PC-9 (cell line): ENCODE measurements at regions of chr3 and their contacts with region 1.

Region 1: GRCh38 chr3:58608648-58609047 is 31.5 kb upstream of the FAM107A start:
- DNase-seq: peak; percentile 73 to 80
- H3K4me3 ChIP-seq: no peak overlapping the region
- H3K27ac ChIP-seq: peak overlapping the region; percentile 48
- H3K4me1 ChIP-seq: peaks cover 20% of the 10 kb centered on the region
- H3K27me3 ChIP-seq: no peaks in the 10 kb centered on the region
- CTCF ChIP-seq: no peak

Region 2: GRCh38 chr3:58433400-58434169 is 175.1 kb before region 1 on chr3 and contains the start of gene PDHB:
- CTCF ChIA-PET with region 1: no interaction called
- POLR2A ChIA-PET with region 1: no interaction called
- intact Hi-C with region 1: loop called (anchors 5 kb)
- DNase-seq: peak; percentile 67 to 87
- H3K4me3 ChIP-seq: peak within 1 kb of the TSS; percentile 84
- H3K27ac ChIP-seq: no peak within 1 kb of the TSS
- H3K4me1 ChIP-seq: peaks cover 13% of the 10 kb centered on the region
- H3K27me3 ChIP-seq: no peaks in the 10 kb centered on the region
- CTCF ChIP-seq: no peak; the same call in 1 of the 2 replicates
- total RNA-seq, gene PDHB: 69.8 and 70.7 TPM in 2 replicates

Region 3: DNA sequence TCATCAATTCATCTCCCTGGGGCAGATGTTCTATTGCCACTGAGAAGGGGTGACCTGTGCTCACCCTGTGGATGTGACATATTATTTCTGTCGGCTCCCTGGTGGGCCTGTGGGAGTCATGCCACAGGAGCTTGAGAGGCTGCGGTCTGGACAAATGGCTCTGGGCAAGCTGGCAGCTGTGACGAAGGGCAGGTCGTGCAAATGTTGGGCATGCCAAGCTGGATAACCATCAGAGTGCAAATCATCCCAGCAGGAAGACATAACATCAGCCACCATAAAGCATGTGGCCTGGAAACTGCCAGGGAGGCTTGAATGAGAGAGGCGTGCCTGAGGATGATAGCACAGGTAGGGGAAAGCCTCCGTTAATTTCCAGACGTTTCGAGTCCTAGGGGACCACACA is 103.2 kb after region 1 on chr3:
- CTCF ChIA-PET with region 1: no interaction called
- POLR2A ChIA-PET with region 1: no interaction called
- intact Hi-C with region 1: no loop called
- DNase-seq: no peak
- H3K4me3 ChIP-seq: no peak overlapping the region
- H3K27ac ChIP-seq: no peak overlapping the region
- H3K4me1 ChIP-seq: no peaks in the 10 kb centered on the region
- H3K27me3 ChIP-seq: no peaks in the 10 kb centered on the region; the same call in 1 of the 2 replicates
- CTCF ChIP-seq: no peak